Activated CD8-positive, alpha-beta T cell treated with anti-CD3 and anti-CD28 coated beads, Interleukin-2, amount 10 ng/mL, durations not matched to agents 7 days and 5 days (primary cell): ENCODE measurements at regions of chr10 and their contacts with region 1.

Region 1: DNA sequence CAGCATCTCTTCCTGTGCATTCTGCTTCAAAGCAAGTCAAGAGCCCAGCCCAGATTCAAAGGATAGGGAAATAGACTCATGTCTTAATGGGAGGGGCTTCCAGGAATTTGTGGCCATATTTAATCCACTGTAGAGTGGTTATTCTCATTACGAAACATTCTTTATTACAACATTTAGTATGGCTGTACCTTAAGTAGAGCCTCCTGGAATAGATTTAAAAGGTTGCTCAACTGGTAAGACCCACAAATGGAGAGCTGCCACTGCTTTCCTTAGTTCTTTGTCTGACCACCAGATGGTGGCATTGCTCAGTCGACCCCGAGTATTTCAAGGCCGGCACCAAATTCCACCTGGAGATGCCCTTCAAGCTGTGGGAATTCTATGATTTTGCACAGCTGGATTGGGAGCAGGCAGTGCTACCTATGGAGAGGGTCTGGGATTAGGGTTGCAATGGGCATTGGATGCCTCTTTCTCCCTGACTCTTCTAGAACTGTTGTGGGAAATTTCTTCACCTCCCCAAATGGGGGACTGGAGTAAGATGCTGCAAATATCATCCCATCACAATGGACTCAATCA is 102.2 kb downstream of the RBM20 start:
- DNase-seq: peak; percentile 67
- ATAC-seq: no peak
- H3K4me3 Mint-ChIP-seq: no peak overlapping the region
- H3K27ac Mint-ChIP-seq: no peak overlapping the region
- H3K4me1 Mint-ChIP-seq: peaks cover 54% of the 10 kb centered on the region
- H3K27me3 Mint-ChIP-seq: no peaks in the 10 kb centered on the region

Region 2: DNA sequence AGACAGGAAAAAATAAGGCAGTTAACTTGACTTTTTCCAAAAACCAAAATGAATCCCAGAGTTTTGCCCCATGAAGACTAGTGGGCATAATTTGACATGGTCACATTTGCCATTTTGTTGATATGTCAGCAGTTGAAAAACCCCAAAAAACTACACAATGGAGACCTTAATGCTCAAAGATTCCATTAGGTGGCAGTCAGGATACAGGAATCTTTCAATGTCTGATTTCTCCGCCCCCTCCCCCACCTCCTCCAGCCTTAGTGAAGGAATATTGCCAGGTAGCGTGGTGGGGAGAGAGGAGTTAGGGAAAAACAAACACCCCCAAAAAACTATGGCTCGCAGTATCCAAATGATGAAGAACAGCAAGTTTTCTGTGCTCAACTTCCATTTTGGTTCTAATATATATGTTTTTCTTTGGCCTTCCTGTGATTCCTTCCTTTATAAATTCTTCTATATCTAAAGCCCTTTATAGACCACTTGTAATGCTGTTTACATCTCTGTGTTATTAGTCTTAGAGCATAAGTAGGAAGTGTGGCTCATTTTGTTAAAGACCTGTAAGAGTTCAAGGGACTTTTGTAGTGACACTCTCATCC is 434.9 kb before region 1 on chr10:
- CTCF ChIA-PET with region 1: no interaction called
- POLR2A ChIA-PET with region 1: no interaction called
- DNase-seq: peak; percentile 47
- ATAC-seq: peak; percentile 69
- H3K4me3 Mint-ChIP-seq: no peak overlapping the region
- H3K27ac Mint-ChIP-seq: no peak overlapping the region
- H3K4me1 Mint-ChIP-seq: peaks cover 18% of the 10 kb centered on the region
- H3K27me3 Mint-ChIP-seq: peaks cover 13% of the 10 kb centered on the region

Region 3: GRCh38 chr10:110460111-110460809 is 286.1 kb before region 1 on chr10:
- CTCF ChIA-PET with region 1: no interaction called
- POLR2A ChIA-PET with region 1: no interaction called
- DNase-seq: peak; percentile 38
- ATAC-seq: peak; percentile 45
- H3K4me3 Mint-ChIP-seq: no peak overlapping the region
- H3K27ac Mint-ChIP-seq: no peak overlapping the region
- H3K4me1 Mint-ChIP-seq: peaks cover 46% of the 10 kb centered on the region
- H3K27me3 Mint-ChIP-seq: peaks cover 3% of the 10 kb centered on the region

Region 4: GRCh38 chr10:110610308-110610774 is 136.0 kb before region 1 on chr10:
- CTCF ChIA-PET with region 1: interaction called, 12 read pairs
- POLR2A ChIA-PET with region 1: no interaction called
- DNase-seq: peak; percentile 71
- ATAC-seq: peak; percentile 60
- H3K4me3 Mint-ChIP-seq: no peak overlapping the region
- H3K27ac Mint-ChIP-seq: no peak overlapping the region
- H3K4me1 Mint-ChIP-seq: peaks cover 39% of the 10 kb centered on the region
- H3K27me3 Mint-ChIP-seq: no peaks in the 10 kb centered on the region

Region 5: GRCh38 chr10:110657968-110658691 is 88.2 kb before region 1 on chr10:
- CTCF ChIA-PET with region 1: no interaction called
- POLR2A ChIA-PET with region 1: no interaction called
- DNase-seq: no peak
- ATAC-seq: no peak
- H3K4me3 Mint-ChIP-seq: no peak overlapping the region
- H3K27ac Mint-ChIP-seq: no peak overlapping the region
- H3K4me1 Mint-ChIP-seq: peaks cover 17% of the 10 kb centered on the region
- H3K27me3 Mint-ChIP-seq: peaks cover 18% of the 10 kb centered on the region

Region 6: GRCh38 chr10:110827410-110827809 is 81.1 kb after region 1 on chr10:
- CTCF ChIA-PET with region 1: no interaction called
- POLR2A ChIA-PET with region 1: no interaction called
- DNase-seq: no peak
- ATAC-seq: no peak
- H3K4me3 Mint-ChIP-seq: no peak overlapping the region
- H3K27ac Mint-ChIP-seq: no peak overlapping the region
- H3K4me1 Mint-ChIP-seq: peaks cover under 1% of the 10 kb centered on the region
- H3K27me3 Mint-ChIP-seq: peaks cover 2% of the 10 kb centered on the region

Region 7: GRCh38 chr10:110864662-110865140 is 118.4 kb after region 1 on chr10:
- CTCF ChIA-PET with region 1: interaction called, 11 read pairs
- POLR2A ChIA-PET with region 1: interaction called, 3 read pairs
- DNase-seq: peak; percentile 81
- ATAC-seq: peak; percentile 69
- H3K4me3 Mint-ChIP-seq: peak overlapping the region; percentile 81
- H3K27ac Mint-ChIP-seq: peak overlapping the region; percentile 96
- H3K4me1 Mint-ChIP-seq: peaks cover 99% of the 10 kb centered on the region
- H3K27me3 Mint-ChIP-seq: no peaks in the 10 kb centered on the region

Region 8: DNA sequence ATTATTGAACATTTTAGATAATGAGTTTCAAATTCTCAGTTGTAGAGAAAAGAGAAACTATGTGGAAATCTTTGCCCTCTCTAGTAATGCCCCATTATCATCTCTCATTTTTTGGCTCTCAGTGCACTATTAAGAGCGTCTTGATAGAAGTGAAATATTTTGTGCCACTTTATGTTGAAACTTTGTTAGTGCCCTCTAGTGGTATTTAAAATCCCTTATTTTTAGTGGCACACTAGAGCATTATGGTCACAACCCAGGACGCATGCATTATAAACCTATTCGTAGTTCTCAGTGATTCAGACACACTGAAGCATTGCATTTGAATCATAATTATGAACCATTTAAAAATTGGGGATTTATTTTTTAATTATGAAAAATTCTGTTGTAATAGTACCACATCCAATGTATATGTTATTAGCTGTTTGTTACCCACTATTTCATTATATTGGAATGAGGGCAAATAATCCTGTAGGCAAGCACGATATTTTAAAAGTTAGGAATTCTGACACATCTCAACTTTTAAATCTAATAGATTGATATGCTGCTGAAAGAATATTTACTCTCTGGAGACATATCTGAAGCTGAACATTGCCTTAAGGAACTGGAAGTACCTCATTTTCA is 147.3 kb after region 1 on chr10:
- CTCF ChIA-PET with region 1: interaction called, 24 read pairs
- POLR2A ChIA-PET with region 1: interaction called, 4 read pairs
- DNase-seq: no peak
- ATAC-seq: peak; percentile 79
- H3K4me3 Mint-ChIP-seq: no peak overlapping the region
- H3K27ac Mint-ChIP-seq: no peak overlapping the region
- H3K4me1 Mint-ChIP-seq: peaks cover 14% of the 10 kb centered on the region
- H3K27me3 Mint-ChIP-seq: no peaks in the 10 kb centered on the region

Region 9: DNA sequence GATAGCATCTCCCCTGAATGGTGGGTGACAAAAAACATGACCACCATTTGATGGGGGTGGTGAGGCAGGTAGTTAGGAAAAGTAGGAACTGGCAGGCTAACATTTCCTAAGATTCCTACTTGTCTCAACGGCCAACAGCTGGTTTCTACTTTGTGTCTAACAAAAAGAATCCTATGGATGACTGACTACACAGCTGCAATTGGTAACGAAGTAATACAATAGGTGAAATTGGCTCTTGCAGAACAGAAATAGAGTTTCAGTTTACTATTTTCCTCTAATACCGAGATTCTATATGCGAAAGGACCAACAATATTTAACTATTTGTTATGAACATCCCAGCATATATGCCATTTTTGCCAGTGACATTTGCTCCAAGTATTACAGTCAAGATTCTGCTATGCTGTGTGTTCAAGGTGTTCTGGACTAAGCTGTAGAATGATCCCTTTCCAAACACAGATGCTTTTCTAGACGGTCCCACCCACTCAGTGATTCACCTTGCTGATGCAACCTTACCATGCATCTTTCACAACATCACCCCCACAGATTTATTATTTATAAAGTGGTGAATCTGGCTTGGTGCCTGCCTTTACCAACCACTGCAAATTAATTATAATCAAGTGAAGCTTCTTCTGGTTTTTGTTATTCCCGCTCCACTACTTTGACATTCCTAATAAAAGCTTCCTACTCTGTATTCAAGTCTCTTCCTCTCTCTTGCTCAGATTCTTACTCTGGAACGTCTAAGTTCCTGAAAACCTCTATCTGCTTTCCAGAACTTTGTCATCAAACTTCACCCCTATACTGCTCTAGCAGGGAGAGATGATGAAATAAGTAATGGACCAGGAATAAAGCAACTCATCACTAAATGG is 155.8 kb after region 1 on chr10:
- CTCF ChIA-PET with region 1: interaction called, 14 read pairs
- POLR2A ChIA-PET with region 1: no interaction called
- DNase-seq: no peak
- ATAC-seq: no peak
- H3K4me3 Mint-ChIP-seq: no peak overlapping the region
- H3K27ac Mint-ChIP-seq: no peak overlapping the region
- H3K4me1 Mint-ChIP-seq: peaks cover 23% of the 10 kb centered on the region
- H3K27me3 Mint-ChIP-seq: no peaks in the 10 kb centered on the region